ENCODE measurements at regions of chr15 and their contacts with region 1.

Region 1: GRCh38 chr15:31128919-31129768 is 27.6 kb upstream of the TRPM1 start:
- DNase-seq: no peak
- ATAC-seq: peak; percentile 96
- H3K4me3 ChIP-seq: no peak overlapping the region
- H3K27ac ChIP-seq: no peak overlapping the region
- H3K4me1 ChIP-seq: peaks cover 0 to 4% of the 10 kb centered on the region in 2 experiments; a peak in 1 of 4 replicates
- H3K27me3 ChIP-seq: no peaks in the 10 kb centered on the region
- CTCF ChIP-seq: peak; percentile 71 to 99 (median 99); a peak in 5 of 6 replicates
- POLR2A ChIP-seq: no peak
- RAD21 ChIP-seq: peak; percentile 84

Region 2: GRCh38 chr15:30791239-30792175 is 337.6 kb before region 1 on chr15:
- CTCF ChIA-PET with region 1: interaction called, 3 read pairs
- POLR2A ChIA-PET with region 1: no interaction called
- RAD21 ChIA-PET with region 1: no interaction called
- intact Hi-C with region 1: loop called (anchors 5 kb)
- DNase-seq: no peak
- ATAC-seq: no peak; the same call in 1 of the 2 replicates
- H3K4me3 ChIP-seq: no peak overlapping the region
- H3K27ac ChIP-seq: no peak overlapping the region
- H3K4me1 ChIP-seq: no peaks in the 10 kb centered on the region
- H3K27me3 ChIP-seq: no peaks in the 10 kb centered on the region
- CTCF ChIP-seq: no peak
- POLR2A ChIP-seq: no peak
- RAD21 ChIP-seq: no peak

Region 3: DNA sequence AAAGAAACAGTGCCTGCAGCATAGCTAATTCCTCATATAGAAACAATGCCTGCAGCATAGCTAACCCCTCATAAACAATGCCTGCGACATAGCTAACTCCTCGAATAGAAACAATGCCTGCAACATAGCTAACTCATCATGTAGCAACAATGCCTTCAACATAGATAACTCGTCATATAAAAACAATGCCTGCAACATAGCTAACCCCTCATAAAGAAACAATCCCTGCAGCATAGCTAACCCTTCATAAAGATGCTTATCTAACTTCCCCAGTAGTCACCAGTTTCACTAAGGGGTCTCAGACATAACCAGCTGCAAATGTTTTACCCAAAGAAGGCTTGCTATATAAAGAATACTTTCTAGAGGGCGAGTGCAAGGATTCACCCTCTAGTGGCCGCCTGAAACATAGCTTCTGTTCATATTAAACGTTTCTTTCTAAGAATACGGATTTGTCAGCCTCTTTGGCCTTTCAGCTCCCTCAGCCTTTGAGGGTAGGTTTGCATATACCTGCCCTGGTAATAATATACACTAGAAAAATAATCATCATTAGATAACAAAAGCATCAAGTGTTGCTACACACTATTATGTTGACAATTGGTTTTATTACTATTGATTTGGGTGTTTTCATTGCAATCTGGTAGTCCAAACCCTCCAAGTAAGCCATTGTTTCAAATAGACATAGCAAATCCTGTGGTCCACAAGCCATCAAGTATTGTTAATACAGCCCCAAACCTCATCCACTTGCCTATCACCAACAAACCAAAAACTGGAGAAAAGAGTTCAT is 269.9 kb before region 1 on chr15:
- CTCF ChIA-PET with region 1: interaction called, 16 read pairs
- POLR2A ChIA-PET with region 1: no interaction called
- RAD21 ChIA-PET with region 1: no interaction called
- intact Hi-C with region 1: no loop called
- DNase-seq: peak; percentile 6
- ATAC-seq: peak; percentile 70; the same call in 1 of the 2 replicates
- H3K4me3 ChIP-seq: no peak overlapping the region
- H3K27ac ChIP-seq: no peak overlapping the region
- H3K4me1 ChIP-seq: no peaks in the 10 kb centered on the region
- H3K27me3 ChIP-seq: no peaks in the 10 kb centered on the region
- CTCF ChIP-seq: peak; percentile 36 to 73 (median 73); a peak in 5 of 6 replicates
- POLR2A ChIP-seq: no peak
- RAD21 ChIP-seq: peak; percentile 40

Region 4: DNA sequence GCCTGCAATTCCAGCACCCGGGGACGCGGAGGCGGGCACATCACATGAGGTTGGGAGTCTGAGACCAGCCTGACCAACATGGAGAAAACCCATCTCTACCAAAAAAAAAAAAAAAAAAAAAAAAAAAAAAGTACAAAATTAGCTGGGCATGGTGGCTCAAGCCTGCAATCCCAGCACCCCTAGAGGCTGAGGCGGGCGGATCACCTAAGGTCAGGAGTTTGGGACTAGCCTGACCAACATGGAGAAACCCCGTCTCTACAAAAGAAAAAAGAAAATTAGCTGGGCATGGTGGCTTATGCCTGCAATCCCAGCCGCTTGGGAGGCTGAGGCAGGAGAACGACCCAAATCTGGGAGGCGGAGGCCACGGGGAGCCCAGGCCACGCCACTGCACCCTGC is 232.9 kb before region 1 on chr15:
- CTCF ChIA-PET with region 1: interaction called, 31 read pairs
- POLR2A ChIA-PET with region 1: no interaction called
- RAD21 ChIA-PET with region 1: interaction called, 8 to 9 read pairs
- intact Hi-C with region 1: loop called (anchors 2 kb)
- DNase-seq: no peak
- ATAC-seq: no peak
- H3K4me3 ChIP-seq: no peak overlapping the region
- H3K27ac ChIP-seq: no peak overlapping the region
- H3K4me1 ChIP-seq: peaks cover 5 to 8% of the 10 kb centered on the region in 2 experiments; a peak in 3 of 4 replicates
- H3K27me3 ChIP-seq: no peaks in the 10 kb centered on the region
- CTCF ChIP-seq: no peak
- POLR2A ChIP-seq: no peak
- RAD21 ChIP-seq: no peak

Region 5: DNA sequence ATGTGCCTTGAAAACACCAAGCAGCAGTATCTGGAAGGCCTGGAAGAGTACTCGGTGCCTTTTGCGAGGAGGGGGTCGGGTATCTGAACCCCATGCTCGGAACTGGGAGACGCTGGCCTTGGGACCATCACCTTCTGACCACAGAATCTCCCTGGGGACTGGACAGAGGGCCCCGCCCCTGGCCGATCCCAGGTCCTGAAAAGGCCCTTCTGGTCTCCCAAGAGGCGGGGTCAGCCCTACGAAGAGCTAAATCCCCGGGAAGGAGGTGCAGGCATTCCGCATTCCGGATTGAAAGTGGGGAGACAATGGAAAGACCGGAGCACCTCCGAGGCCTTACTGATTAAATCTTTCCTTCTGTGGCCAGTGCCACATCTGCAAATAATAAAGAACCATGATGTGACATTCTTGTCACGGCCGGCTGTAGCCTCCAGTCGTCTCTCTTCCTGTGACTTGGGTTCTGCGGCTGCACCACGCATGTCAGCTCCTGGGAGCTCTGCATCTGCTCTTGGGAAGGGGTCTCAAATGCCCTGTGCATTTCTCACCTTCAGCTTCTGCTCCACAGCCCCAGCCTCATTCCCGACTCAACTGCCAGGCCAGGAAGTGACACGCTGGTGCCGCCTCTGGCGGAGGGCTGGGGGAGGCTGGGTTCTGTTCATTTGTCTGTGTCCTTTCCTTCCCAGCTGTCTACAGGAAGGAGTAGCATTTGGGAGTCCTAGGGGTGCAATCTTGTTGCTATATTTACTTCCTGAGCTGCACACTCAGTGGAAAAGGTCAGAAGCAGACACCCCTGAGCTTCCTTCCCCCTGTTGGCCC is 371.0 kb after region 1 on chr15:
- CTCF ChIA-PET with region 1: no interaction called
- POLR2A ChIA-PET with region 1: no interaction called
- RAD21 ChIA-PET with region 1: no interaction called
- intact Hi-C with region 1: no loop called
- DNase-seq: no peak
- ATAC-seq: no peak
- H3K4me3 ChIP-seq: no peak overlapping the region
- H3K27ac ChIP-seq: no peak overlapping the region
- H3K4me1 ChIP-seq: no peaks in the 10 kb centered on the region
- H3K27me3 ChIP-seq: no peaks in the 10 kb centered on the region
- CTCF ChIP-seq: no peak
- POLR2A ChIP-seq: no peak
- RAD21 ChIP-seq: no peak

Region 6: GRCh38 chr15:31615643-31616415 is 486.7 kb after region 1 on chr15:
- CTCF ChIA-PET with region 1: no interaction called
- POLR2A ChIA-PET with region 1: no interaction called
- RAD21 ChIA-PET with region 1: no interaction called
- intact Hi-C with region 1: no loop called
- DNase-seq: no peak
- ATAC-seq: no peak
- H3K4me3 ChIP-seq: no peak overlapping the region
- H3K27ac ChIP-seq: no peak overlapping the region
- H3K4me1 ChIP-seq: no peaks in the 10 kb centered on the region
- H3K27me3 ChIP-seq: no peaks in the 10 kb centered on the region
- CTCF ChIP-seq: no peak
- POLR2A ChIP-seq: no peak
- RAD21 ChIP-seq: no peak